ENCODE measurements at regions of chr20 and their contacts with region 1.

Region 1: GRCh38 chr20:49219089-49219923 is at the start of gene DDX27:
- DNase-seq: peak; percentile 93
- ATAC-seq: peak; percentile 84
- H3K4me3 Mint-ChIP-seq: peak within 1 kb of the TSS; percentile 94
- H3K27ac Mint-ChIP-seq: peak within 1 kb of the TSS; percentile 93
- H3K4me1 Mint-ChIP-seq: peaks cover 28% of the 10 kb centered on the region
- H3K27me3 Mint-ChIP-seq: no peaks in the 10 kb centered on the region
- CTCF ChIP-seq: no peak
- total RNA-seq, gene DDX27: 76.5 and 78.4 TPM in 2 replicates

Region 2: DNA sequence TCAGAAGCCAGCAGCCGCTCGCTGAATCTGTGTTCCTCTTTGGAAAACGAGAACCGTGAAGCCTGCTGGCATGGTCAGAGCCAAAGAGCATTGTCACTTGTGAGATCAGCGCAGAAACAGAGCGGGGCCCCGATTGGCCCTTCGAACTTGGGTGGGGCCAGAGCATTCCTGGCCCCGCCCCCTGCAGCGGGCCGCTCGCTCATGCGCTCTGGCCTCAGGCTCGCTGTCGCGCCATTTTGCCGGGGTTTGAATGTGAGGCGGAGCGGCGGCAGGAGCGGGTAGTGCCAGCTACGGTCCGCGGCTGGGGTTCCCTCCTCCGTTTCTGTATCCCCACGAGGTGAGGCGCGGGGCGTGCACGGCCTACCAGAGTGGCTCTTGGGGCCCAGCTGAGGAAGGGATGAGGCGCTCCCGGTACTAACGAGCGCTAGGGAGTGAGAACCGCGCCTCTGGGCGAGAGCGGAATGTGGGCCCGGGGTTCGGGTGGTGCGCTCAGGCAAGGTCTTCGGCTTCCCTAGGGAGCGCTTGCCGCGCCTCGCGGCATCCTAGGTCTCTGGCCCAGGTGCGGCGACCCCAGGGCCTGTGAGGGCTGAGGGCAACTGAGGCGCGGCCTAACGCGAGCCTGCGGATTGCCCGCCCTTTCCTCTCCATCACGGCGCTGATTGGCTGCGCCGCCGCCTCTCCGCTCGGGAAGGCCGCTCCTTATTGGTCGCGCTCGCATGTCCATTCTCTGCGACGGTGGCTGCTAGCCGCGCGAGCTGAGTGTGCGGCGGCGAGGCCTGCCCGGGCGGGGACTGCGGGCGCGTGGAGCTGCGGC is 173.0 kb before region 1 on chr20 and contains the start of gene CSE1L:
- CTCF ChIA-PET with region 1: interaction called, 3 read pairs
- POLR2A ChIA-PET with region 1: interaction called, 11 read pairs
- intact Hi-C with region 1: loop called (anchors 1 kb)
- DNase-seq: peak; percentile 95
- ATAC-seq: peak; percentile 86
- H3K4me3 Mint-ChIP-seq: peak within 1 kb of the TSS; percentile 97
- H3K27ac Mint-ChIP-seq: peak within 1 kb of the TSS; percentile 94
- H3K4me1 Mint-ChIP-seq: peaks cover 31% of the 10 kb centered on the region
- H3K27me3 Mint-ChIP-seq: no peaks in the 10 kb centered on the region
- CTCF ChIP-seq: no peak
- total RNA-seq, gene CSE1L: 53.2 and 58.8 TPM in 2 replicates

Region 3: DNA sequence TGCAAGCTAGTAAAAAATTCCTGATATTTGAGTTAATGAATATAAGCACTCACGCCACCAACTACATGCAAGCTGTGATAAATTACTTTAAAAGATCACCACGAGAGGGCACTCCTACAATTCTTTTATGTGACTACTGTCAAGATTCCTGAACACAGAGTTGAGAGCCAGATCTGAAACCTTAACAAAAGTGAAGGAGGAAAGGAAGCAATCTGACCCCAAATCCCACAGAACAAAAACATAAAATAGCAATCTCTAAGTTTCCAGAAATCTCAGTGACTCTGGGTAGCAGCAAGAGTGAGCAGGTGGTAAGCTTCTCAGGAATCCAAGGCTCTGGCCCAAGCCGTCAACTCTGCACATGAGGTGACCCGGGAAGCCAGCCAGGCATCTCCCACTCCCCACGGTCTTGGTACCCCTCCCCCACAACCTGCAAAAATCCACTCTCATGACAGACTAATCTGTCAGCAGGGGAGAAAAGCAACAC is 86.3 kb before region 1 on chr20:
- CTCF ChIA-PET with region 1: interaction called, 93 read pairs
- POLR2A ChIA-PET with region 1: interaction called, 4 read pairs
- intact Hi-C with region 1: loop called (anchors 1 kb)
- DNase-seq: no peak
- ATAC-seq: no peak
- H3K4me3 Mint-ChIP-seq: no peak overlapping the region
- H3K27ac Mint-ChIP-seq: peak overlapping the region; percentile 30
- H3K4me1 Mint-ChIP-seq: peaks cover 2% of the 10 kb centered on the region
- H3K27me3 Mint-ChIP-seq: no peaks in the 10 kb centered on the region
- CTCF ChIP-seq: no peak

Region 4: DNA sequence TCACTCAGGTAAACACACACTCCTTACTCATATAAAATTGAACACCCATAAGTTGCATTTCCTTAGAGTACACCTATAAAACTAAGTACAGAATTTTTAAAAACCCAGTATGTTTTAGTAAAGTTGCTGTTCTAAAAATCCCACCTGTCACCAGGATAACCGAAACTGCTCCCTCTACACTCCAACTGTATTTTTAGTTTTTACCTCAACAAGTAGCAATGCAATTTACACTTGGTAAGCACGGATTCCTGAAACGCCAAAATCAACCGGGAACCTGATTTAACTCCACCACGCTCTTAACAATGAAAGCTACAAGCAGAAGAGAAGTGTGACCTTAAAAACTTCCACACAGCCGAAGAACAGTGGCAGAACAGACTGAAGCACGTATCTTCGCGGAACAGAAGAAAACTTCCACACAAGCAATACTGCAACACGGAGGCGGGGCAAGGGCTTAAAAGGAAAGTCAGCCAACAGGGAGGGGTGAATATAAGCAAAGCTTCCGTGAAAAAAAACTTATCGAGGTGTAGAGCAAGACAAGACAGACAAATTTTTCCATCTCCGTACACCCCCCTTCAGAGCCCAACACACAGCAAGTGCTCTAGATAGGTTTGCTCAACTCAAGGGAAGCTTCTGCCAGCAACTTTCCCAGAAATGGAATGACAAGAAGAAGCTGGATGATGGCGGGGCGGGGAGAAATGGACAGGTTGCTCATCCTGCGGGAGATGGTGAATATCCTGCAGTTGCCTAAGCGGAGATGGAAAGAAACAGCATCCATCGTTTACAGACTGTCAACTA is 32.6 kb before region 1 on chr20:
- CTCF ChIA-PET with region 1: interaction called, 8 read pairs
- POLR2A ChIA-PET with region 1: interaction called, 28 read pairs
- intact Hi-C with region 1: loop called (anchors 1 kb)
- DNase-seq: no peak
- ATAC-seq: peak; percentile 4
- H3K4me3 Mint-ChIP-seq: peak overlapping the region; percentile 85
- H3K27ac Mint-ChIP-seq: peak overlapping the region; percentile 77
- H3K4me1 Mint-ChIP-seq: peaks cover 54% of the 10 kb centered on the region
- H3K27me3 Mint-ChIP-seq: peaks cover 7% of the 10 kb centered on the region
- CTCF ChIP-seq: no peak

Region 5: DNA sequence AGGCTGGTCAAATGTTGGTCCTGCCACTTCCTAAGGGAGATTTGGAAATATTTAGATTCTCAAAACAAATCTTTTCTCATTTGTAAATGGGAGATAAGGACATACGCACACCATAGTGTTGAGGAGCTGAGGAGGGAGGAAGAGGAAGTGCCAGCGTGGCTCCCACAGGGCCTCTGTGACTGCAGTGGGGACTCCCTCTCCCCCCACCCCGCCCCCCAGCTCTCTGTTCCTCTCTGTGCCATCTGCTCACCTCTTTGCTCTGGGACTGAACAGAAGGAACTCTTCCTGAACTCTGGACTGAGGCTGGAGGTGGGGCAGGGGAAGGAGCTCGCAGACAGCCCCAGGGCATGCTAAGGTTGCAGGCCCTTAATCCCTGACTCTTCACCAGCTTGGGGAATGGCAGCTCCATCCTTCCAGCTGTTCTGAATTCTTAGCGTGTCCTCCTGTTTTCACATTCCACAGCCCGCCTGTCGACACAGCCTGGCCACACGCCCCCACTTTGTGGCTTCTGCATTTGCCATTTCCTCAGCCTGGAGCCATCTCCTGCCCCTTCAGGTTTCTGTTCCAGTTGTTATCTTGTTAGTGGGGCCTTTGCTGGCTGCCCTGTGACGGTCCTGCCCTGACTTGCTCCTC is 11.4 kb after region 1 on chr20:
- CTCF ChIA-PET with region 1: no interaction called
- POLR2A ChIA-PET with region 1: interaction called, 13 read pairs
- intact Hi-C with region 1: loop called (anchors 1 kb)
- DNase-seq: no peak
- ATAC-seq: peak; percentile 99
- H3K4me3 Mint-ChIP-seq: peak overlapping the region; percentile 41
- H3K27ac Mint-ChIP-seq: peak overlapping the region; percentile 86
- H3K4me1 Mint-ChIP-seq: peaks cover 15% of the 10 kb centered on the region
- H3K27me3 Mint-ChIP-seq: no peaks in the 10 kb centered on the region
- CTCF ChIP-seq: no peak

Region 6: DNA sequence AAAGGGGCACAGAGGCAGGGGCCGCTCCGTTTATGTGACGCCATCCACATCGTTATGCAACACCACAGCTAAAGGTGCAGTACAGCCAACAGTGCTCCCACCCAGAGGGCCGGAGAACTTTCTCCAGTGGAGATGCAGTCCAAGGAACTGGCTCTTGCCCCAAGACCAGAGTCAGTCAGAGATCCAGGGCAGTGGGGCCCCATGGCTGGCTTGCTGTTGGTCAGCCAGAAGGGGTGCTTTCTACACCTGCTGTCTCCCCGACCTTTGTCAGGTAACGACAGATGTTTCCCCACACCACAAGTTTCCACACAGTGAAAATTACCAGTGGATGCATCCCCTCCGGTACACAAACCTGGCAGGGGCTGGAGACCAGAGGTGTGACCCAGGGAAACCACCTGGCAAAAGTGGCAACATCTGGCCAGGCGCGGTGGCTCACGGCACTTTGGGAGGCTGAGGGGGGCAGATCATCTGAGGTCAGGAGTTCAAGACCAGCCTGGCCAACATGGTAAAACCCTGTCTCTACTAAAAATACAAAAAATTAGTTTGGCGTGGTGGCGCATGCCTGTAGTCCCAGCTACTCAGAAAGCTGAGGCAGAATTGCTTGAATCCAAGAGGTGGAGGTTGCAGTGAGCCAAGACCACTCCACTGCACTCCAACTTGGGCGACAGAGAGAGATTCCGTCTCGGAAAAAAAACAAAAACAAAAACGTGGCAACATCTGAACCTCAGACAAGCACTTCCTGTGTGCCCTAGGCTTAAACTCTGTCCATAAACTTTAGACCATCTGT is 858.7 kb after region 1 on chr20:
- CTCF ChIA-PET with region 1: no interaction called
- POLR2A ChIA-PET with region 1: no interaction called
- intact Hi-C with region 1: no loop called
- DNase-seq: no peak
- ATAC-seq: no peak
- H3K4me3 Mint-ChIP-seq: no peak overlapping the region
- H3K27ac Mint-ChIP-seq: no peak overlapping the region
- H3K4me1 Mint-ChIP-seq: no peaks in the 10 kb centered on the region
- H3K27me3 Mint-ChIP-seq: no peaks in the 10 kb centered on the region
- CTCF ChIP-seq: no peak

Region 7: DNA sequence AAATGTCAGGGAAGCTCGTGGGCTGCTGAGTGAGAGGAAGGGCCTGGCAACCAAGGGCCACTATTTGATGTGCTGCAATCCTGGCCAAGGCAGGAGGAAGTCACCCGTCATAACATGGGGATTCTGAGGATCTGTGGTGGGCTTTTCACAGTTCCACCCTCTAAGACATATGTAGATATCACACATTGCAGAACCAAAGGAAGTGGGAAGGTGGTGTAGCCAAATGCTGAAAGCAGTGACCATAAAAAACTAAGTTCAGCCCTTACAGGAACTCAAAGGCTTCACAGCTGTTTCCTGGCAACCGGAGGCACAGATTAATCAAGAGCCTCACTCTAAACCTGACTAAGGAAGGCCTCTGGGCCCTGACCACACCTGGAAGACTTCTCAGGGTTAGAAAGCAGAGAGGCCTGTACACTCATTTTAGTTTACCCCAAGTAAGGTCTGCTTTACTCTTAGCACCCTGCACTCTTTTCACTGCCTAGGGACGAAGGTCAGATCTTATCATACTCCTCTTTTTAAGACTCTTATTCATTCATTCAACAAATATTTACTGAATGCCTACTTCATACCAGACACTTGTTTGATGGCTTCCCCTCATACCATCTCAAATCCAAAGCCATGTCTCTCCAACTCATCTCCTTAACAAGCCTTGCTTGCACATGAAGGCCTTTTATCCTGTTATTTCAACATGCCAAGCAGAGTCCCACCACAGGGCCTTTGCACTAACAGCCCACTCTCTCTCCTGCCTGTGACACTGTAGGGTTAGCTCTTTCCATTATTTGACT is 891.0 kb after region 1 on chr20:
- CTCF ChIA-PET with region 1: no interaction called
- POLR2A ChIA-PET with region 1: interaction called, 10 read pairs
- intact Hi-C with region 1: no loop called
- DNase-seq: no peak
- ATAC-seq: peak; percentile 31
- H3K4me3 Mint-ChIP-seq: peak overlapping the region; percentile 98
- H3K27ac Mint-ChIP-seq: peak overlapping the region; percentile 88
- H3K4me1 Mint-ChIP-seq: peaks cover 89% of the 10 kb centered on the region
- H3K27me3 Mint-ChIP-seq: no peaks in the 10 kb centered on the region
- CTCF ChIP-seq: no peak

Measured in activated B cell treated with CpG ODN at 0.5 μM for 24 hours (primary cell).